ENCODE measurements at regions of chr11 and their contacts with region 1.

Region 1: GRCh38 chr11:87421422-87421821 is 383.7 kb downstream of the TMEM135 start:
- DNase-seq: peak; percentile 56
- H3K4me3 ChIP-seq: peak overlapping the region in 1 of 2 experiments; percentile 29; a peak in 1 of 4 replicates
- H3K27ac ChIP-seq: no peak overlapping the region
- H3K4me1 ChIP-seq: 0 out of 4 replicates have a peak, but pooled peaks cover 0 to 10% of the 10 kb centered on the region in 2 experiments
- H3K27me3 ChIP-seq: no peaks in the 10 kb centered on the region
- CTCF ChIP-seq: peak; percentile 75
- EP300 ChIP-seq: no peak
- RAD21 ChIP-seq: peak; percentile 71

Region 2: GRCh38 chr11:86938900-86939880 is 482.2 kb before region 1 on chr11:
- CTCF ChIA-PET with region 1: interaction called, 50 read pairs
- POLR2A ChIA-PET with region 1: no interaction called
- DNase-seq: peak; percentile 41
- H3K4me3 ChIP-seq: no peak overlapping the region; a peak in 1 of 4 replicates
- H3K27ac ChIP-seq: no peak overlapping the region
- H3K4me1 ChIP-seq: peaks cover 0 to 24% of the 10 kb centered on the region in 2 experiments; a peak in 1 of 4 replicates
- H3K27me3 ChIP-seq: no peaks in the 10 kb centered on the region
- CTCF ChIP-seq: peak; percentile 68
- EP300 ChIP-seq: no peak
- RAD21 ChIP-seq: peak; percentile 79

Region 3: GRCh38 chr11:86999859-87000753 is 421.3 kb before region 1 on chr11:
- CTCF ChIA-PET with region 1: no interaction called
- POLR2A ChIA-PET with region 1: no interaction called
- DNase-seq: peak; percentile 36
- H3K4me3 ChIP-seq: no peak overlapping the region
- H3K27ac ChIP-seq: no peak overlapping the region
- H3K4me1 ChIP-seq: peaks cover 5 to 8% of the 10 kb centered on the region in 2 experiments; a peak in 2 of 4 replicates
- H3K27me3 ChIP-seq: no peaks in the 10 kb centered on the region
- CTCF ChIP-seq: no peak
- EP300 ChIP-seq: no peak
- RAD21 ChIP-seq: no peak

Region 4: DNA sequence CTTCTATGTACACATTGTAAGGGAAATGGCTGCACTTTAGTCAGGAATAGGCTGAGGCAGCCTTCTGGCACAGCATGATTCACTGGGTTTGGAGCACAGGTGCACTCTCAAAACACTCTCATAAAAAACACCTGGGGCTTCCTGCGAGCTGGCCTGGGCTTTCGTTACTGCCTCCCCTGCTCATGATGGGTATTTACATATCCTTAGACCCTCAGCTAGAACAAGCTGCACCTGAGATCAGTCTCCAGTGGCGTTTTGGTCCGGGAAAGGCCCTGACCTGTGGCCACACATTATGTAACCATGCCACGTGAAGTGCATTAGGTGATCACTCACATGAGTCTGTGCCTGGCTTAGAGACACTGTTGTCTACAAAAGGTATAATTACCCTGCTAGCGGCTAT is 62.0 kb before region 1 on chr11:
- CTCF ChIA-PET with region 1: interaction called, 141 read pairs
- POLR2A ChIA-PET with region 1: no interaction called
- DNase-seq: no peak
- H3K4me3 ChIP-seq: no peak overlapping the region
- H3K27ac ChIP-seq: no peak overlapping the region
- H3K4me1 ChIP-seq: no peaks in the 10 kb centered on the region
- H3K27me3 ChIP-seq: no peaks in the 10 kb centered on the region
- CTCF ChIP-seq: no peak
- EP300 ChIP-seq: no peak
- RAD21 ChIP-seq: no peak

Region 5: GRCh38 chr11:87432022-87432421 is 10.6 kb after region 1 on chr11:
- CTCF ChIA-PET with region 1: interaction called, 21 read pairs
- POLR2A ChIA-PET with region 1: no interaction called
- DNase-seq: no peak
- H3K4me3 ChIP-seq: no peak overlapping the region
- H3K27ac ChIP-seq: no peak overlapping the region
- H3K4me1 ChIP-seq: no peaks in the 10 kb centered on the region
- H3K27me3 ChIP-seq: no peaks in the 10 kb centered on the region
- CTCF ChIP-seq: no peak
- EP300 ChIP-seq: no peak
- RAD21 ChIP-seq: no peak

Region 6: DNA sequence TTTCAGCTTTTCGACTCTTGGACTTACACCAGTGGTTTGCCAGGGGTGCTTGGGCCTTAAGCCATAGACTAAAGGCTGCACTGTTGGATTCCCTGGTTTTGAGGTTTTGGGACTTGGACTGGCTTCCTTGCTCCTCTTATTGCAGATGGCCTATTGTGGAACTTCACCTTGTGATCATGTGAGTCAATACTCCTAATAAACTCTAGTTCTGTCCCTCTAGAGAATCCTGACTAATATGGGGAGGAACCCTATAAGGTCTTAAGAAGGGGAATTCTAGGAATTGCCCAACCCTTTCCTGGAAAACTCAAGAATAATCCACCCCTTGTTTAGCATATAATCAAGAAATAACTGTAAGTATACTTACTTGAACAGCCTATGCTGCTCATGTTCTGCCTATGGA is 108.1 kb after region 1 on chr11:
- CTCF ChIA-PET with region 1: no interaction called
- POLR2A ChIA-PET with region 1: no interaction called
- DNase-seq: no peak
- H3K4me3 ChIP-seq: no peak overlapping the region
- H3K27ac ChIP-seq: no peak overlapping the region
- H3K4me1 ChIP-seq: no peaks in the 10 kb centered on the region
- H3K27me3 ChIP-seq: no peaks in the 10 kb centered on the region
- CTCF ChIP-seq: no peak
- EP300 ChIP-seq: no peak
- RAD21 ChIP-seq: no peak

Region 7: GRCh38 chr11:87545858-87546257 is 124.4 kb after region 1 on chr11:
- CTCF ChIA-PET with region 1: no interaction called
- POLR2A ChIA-PET with region 1: no interaction called
- DNase-seq: no peak
- H3K4me3 ChIP-seq: no peak overlapping the region
- H3K27ac ChIP-seq: no peak overlapping the region
- H3K4me1 ChIP-seq: no peaks in the 10 kb centered on the region
- H3K27me3 ChIP-seq: no peaks in the 10 kb centered on the region
- CTCF ChIP-seq: no peak
- EP300 ChIP-seq: no peak
- RAD21 ChIP-seq: no peak

Measured in SK-N-SH (cell line).